ENCODE measurements at regions of chr1 and their contacts with region 1.

Region 1: GRCh38 chr1:201559679-201560162 is 20.8 kb downstream of the NAV1 start:
- DNase-seq: peak; percentile 58
- H3K4me3 ChIP-seq: no peak overlapping the region
- H3K27ac ChIP-seq: no peak overlapping the region
- H3K4me1 ChIP-seq: no peaks in the 10 kb centered on the region
- H3K27me3 ChIP-seq: no peaks in the 10 kb centered on the region
- CTCF ChIP-seq: peak; percentile 96 to 99 (median 98)

Region 2: DNA sequence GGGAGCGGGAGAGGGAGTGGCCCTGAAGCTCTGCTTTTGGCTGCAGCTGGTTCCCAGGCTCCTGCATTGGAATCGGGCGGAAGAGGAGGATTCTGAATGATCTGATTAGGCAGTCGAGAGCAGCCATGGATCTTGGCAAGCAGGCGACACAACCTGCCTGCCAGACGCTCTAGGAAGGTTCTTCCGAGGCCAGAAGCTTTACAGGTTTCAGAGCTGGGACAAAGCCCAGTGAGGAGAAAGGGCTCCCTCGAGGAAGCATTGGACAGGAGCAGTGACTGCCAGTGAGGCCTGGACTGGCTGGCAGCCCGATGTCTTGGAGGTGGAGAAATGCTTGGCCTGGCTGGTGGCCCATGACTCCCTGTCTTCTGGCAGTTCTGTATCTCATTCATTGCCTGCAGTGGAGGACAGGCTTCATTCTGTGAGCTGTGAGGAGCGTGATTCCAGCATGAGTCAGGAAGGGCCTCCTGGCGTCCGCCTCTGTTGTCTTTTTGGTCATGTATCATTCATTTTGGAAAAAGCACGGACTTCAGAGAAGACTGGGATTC is 136.6 kb after region 1 on chr1:
- dilution Hi-C with region 1: loop called (anchors 25 kb)
- DNase-seq: no peak
- H3K4me3 ChIP-seq: no peak overlapping the region
- H3K27ac ChIP-seq: no peak overlapping the region
- H3K4me1 ChIP-seq: peaks cover 12% of the 10 kb centered on the region
- H3K27me3 ChIP-seq: no peaks in the 10 kb centered on the region
- CTCF ChIP-seq: no peak

Region 3: DNA sequence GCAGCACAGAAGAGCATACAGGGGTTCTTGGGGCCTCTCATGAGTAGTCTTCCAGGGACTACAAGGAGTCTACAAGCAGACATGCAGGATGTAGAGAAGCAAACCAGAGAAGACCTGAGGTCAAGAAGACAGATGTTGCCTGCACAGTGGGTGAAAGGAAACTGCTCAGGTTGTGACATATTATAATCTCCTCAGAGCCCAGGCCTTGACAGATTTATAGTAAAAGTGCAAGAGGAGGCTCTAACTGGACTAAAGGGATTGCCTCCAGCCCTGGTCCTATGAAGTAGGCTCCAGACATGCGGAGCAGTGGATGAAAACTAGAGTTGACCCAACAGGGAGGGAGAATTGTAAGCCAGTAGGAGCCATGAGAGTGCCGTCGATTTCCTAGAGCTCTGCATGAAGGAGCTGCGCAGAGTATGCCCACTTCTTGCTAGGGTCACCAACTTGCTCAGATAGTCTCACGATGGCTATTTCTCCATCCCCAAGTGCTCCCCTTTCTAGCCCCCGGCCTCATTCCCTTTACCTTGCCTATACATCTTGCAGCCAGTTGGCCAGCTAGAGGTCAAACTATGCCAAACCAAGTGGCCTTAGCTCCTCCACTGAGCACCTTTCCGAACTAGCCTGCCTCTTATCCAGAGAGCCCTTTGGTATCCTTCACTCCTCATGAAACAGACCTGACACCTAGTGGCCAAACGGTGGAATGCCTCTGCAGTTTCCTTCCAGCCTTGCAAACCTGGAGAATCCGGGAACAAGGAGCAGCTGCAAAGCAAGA is 233.0 kb after region 1 on chr1:
- dilution Hi-C with region 1: loop called (anchors 25 kb)
- DNase-seq: peak; percentile 48
- H3K4me3 ChIP-seq: no peak overlapping the region
- H3K27ac ChIP-seq: no peak overlapping the region
- H3K4me1 ChIP-seq: peaks cover 25% of the 10 kb centered on the region
- H3K27me3 ChIP-seq: no peaks in the 10 kb centered on the region
- CTCF ChIP-seq: peak; percentile 91 to 99 (median 95)